Breast epithelium (tissue), 4 donors: ENCODE measurements at regions of chr10 and their contacts with region 1.

Region 1: DNA sequence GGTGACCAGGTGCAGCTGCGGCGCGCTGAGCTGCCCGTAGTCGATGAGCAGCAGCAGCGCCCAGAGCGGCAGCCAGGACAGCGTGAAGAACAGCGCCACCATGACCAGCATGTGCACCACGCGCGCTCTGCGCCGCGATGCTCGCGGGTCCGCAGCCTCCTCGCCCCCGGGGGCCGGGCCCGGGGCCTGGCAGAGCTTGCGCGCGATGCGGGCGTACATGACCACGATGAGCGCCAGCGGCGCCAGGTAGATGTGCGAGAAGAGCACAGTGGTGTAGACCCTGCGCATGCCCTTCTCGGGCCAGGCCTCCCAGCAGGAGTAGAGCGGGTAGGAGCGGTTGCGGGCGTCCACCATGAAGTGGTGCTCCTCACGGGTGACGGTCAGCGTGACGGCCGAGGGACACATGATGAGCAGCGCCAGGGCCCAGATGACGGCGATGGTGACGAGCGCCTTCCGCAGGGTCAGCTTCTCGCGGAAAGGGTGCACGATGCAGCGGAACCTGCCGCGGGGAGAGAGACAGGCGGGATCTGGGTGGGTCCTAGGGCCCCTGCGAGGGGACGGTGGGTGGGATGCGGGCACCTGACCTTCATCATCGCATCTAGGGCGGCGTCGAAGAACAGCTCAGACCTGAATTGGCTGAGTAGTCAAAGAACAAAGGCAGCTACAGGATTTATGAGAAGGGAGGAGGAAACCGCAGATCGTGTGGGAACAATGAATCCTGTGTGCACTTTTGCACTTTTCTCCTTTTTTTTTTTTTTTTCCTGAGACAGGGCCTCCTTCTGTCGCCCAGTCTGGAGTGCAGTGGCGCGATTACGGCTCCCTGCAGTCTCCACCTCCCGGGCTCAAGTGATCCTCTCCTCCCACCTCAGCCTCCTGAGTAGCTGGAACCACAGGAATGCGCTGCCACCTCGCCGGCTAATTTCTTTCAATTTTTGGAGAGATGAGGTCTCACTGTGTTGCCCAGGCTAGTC is 22.4 kb upstream of the PPA1 start:
- DNase-seq: peak in 1 of 2 donors; percentile 78
- H3K4me3 ChIP-seq: peak overlapping the region in 2 of 3 donors; percentile 25 to 56
- H3K27ac ChIP-seq: peak overlapping the region; percentile 25 to 66
- H3K4me1 ChIP-seq: no peaks in the 10 kb centered on the region
- H3K27me3 ChIP-seq: no peaks in the 10 kb centered on the region
- CTCF ChIP-seq: no peak
- POLR2A ChIP-seq: no peak

Region 2: DNA sequence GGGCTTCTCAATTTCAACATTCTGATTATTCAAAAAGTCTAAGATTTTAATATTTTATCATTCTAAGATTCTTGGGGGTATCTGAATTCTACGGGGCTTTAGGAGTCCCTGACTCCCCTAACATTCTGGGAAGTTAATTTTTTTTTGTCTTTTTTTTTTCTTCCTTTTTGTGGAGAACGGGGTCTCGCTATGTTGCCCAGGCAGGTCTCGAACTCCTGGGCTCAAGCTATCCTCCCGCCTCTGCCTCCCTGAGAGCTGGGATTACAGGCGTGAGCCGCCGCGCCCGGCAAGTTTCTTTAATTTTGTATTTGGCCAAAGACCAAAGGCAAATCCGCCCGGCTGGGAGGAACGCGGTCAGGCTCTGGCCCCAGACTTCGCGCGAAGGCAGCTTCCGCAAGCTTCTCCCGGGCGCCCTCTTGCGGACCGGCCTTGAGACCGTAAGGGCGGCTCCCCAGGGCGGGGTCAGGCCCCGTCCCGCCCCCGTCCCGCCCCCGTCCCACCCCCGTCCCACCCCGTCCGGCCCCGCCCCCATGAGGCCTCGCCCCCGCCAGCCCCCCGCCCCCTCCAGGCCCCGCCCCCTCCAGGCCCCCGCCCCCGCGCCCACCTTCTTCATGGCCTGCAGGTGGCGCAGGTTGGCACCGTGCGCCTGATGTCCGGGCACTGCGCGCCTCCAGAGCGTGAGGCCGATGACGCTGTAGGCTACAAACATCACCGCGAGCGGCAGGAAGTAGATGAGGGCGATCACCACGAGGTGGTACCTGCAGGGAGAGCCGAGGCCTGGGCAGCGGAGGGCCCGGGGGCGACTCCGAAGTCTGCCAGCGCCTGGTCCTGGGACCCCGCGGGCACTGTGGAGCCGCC is 847.1 kb before region 1 on chr10:
- intact Hi-C with region 1: no loop called
- DNase-seq: peak; percentile 90 to 94
- H3K4me3 ChIP-seq: peak overlapping the region; percentile 39 to 61 (median 54)
- H3K27ac ChIP-seq: peak overlapping the region; percentile 79 to 88
- H3K4me1 ChIP-seq: no peaks in the 10 kb centered on the region
- H3K27me3 ChIP-seq: no peaks in the 10 kb centered on the region
- CTCF ChIP-seq: peak; percentile 41 to 62 (median 46)
- POLR2A ChIP-seq: no peak

Region 3: DNA sequence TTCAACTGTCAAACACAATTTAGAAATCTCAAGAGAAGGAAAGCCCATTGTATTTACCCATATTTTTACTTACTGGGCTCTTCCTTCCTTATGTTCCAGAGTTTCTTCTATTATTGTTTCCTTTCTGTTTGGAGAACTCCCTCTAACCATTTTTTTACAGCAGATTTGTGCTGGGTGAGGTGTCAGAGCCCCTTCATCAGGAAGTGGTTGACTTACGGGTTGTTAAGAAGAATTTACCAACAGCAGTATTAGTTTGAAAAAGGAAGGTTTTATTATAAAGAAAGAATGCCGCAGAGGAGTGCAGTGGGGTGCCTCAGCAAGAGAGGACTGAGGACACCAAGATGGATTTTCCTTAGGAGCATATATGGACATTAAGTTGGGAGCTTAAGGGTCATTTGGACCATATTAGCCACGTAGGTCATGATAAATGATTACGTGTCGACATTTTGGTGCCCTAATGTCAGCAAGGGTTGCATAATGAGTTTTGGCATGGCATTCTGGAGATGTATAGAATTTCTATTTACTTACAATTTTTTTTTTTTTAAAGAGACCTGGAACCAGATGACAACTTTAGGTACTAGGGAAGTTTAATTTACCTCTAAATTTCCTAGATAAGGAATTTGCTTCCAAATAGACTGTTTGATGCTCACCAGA is 535.9 kb after region 1 on chr10:
- intact Hi-C with region 1: loop called (anchors 5 kb)
- DNase-seq: no peak
- H3K4me3 ChIP-seq: no peak overlapping the region
- H3K27ac ChIP-seq: no peak overlapping the region
- H3K4me1 ChIP-seq: no peaks in the 10 kb centered on the region
- H3K27me3 ChIP-seq: no peaks in the 10 kb centered on the region
- CTCF ChIP-seq: no peak
- POLR2A ChIP-seq: no peak